ENCODE measurements at regions of chr1 and their contacts with region 1.

Region 1: DNA sequence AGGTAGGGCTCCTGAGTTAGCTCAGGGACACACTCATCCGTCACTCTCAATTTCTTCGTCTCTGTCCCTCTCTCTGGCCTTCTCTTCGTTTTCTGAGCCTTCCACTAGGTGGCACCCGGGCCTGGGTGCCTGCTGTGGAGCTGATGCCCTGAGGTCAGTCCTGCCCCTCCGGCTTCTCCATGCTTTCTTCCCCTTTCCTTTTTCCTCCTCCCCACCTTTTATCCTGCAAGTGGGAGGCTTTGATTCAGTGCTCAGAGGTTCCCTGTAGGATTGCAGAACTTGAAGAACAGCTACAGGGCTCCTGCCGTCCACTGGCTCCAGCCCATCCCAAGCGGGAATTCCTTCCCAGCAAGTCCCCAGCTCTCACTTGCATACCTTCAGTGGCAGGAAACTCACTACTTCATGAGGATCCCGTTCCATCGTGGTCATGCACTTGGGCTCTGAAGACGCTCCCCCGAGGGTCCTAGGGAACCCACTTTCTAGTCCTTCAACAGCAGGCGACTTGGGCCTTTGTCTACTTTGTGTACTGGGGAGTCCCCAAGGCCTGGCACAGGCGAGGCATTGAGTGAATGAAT is 45.6 kb downstream of the SRRM1 start:
- DNase-seq: peak; percentile 74
- ATAC-seq: peak; percentile 86
- H3K4me3 Mint-ChIP-seq: no peak overlapping the region
- H3K27ac Mint-ChIP-seq: no peak overlapping the region
- H3K4me1 Mint-ChIP-seq: peaks cover under 1% of the 10 kb centered on the region
- H3K27me3 Mint-ChIP-seq: peaks cover 6% of the 10 kb centered on the region

Region 2: GRCh38 chr1:24403806-24404205 is 284.9 kb before region 1 on chr1:
- CTCF ChIA-PET with region 1: no interaction called
- DNase-seq: no peak
- ATAC-seq: no peak
- H3K4me3 Mint-ChIP-seq: no peak overlapping the region
- H3K27ac Mint-ChIP-seq: no peak overlapping the region
- H3K4me1 Mint-ChIP-seq: no peaks in the 10 kb centered on the region
- H3K27me3 Mint-ChIP-seq: no peaks in the 10 kb centered on the region

Region 3: DNA sequence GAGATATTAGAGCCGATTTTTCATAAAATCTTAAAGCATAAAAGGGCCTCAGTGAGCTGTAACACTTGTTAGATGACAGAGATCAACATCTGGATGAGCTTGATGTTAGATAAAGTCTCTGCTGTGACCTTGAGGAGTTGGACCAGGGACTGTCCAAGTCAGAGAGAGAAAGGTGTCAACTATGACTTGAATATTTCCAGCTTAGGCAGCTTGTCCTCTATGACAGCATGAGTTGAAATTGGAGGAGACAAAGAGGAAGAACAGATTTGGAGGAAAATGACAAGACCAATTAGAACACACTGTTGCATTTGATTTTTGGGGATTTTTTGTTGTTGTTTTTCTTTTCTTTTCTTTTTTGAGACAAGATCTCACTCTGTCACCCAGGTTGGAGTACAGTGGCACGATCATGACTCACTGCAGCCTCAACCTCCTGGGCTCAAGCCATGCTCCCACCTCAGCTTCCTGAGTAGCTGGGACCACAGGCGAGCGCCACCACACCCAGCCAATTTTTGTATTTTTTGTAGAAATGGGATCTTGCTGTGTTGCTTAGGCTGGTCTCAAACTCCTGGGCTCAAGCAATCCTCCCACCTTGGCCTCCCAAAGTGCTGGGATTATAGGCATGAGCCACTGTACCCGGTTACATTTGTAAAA is 21.2 kb after region 1 on chr1:
- CTCF ChIA-PET with region 1: interaction called, 13 read pairs
- DNase-seq: peak; percentile 77
- ATAC-seq: peak; percentile 67
- H3K4me3 Mint-ChIP-seq: no peak overlapping the region
- H3K27ac Mint-ChIP-seq: peak overlapping the region; percentile 70
- H3K4me1 Mint-ChIP-seq: peaks cover 24% of the 10 kb centered on the region
- H3K27me3 Mint-ChIP-seq: no peaks in the 10 kb centered on the region

Region 4: DNA sequence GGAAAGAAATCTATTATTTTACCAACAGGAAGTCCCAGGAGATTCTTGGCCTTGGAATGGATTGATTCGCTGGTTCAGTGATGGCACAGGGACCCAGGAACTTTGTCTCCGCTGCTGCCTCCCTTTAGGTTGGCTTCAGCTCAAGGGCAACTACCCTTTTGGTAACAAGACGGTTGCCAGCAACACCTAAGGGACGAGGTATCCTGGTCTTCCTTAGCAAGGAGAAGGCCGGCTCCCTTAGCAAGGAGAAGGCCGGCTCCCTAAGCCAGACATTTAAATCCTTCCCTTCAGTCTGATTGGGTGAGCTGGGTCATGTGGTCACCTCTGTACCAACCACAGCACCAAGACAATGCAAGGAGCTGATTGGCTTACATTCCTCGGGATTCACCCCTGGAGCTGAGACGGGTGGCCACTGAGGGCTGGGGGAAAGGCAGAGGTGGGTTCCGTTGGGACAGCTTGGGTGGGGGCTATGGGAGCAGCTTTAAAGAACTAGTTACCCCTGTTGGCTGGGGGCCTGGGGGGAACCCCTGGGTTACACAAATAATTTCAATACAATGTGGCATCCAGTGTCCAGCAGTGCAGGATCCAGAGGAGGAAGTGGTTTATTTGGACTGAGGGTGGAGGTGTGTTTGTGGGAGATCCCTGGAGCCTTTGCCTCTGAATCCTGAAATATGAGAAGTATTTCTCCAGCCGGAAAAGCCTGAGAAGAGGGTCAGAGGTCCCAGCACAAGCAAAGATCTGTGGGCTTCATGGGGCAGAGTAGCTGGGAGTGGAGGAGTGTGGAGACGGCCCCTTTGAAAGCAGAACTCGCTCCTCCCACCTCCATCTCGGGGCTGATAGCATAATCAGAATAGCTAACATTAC is 35.9 kb after region 1 on chr1:
- CTCF ChIA-PET with region 1: interaction called, 11 read pairs
- DNase-seq: no peak
- ATAC-seq: no peak
- H3K4me3 Mint-ChIP-seq: no peak overlapping the region
- H3K27ac Mint-ChIP-seq: no peak overlapping the region
- H3K4me1 Mint-ChIP-seq: peaks cover 13% of the 10 kb centered on the region
- H3K27me3 Mint-ChIP-seq: peaks cover 13% of the 10 kb centered on the region

Region 5: DNA sequence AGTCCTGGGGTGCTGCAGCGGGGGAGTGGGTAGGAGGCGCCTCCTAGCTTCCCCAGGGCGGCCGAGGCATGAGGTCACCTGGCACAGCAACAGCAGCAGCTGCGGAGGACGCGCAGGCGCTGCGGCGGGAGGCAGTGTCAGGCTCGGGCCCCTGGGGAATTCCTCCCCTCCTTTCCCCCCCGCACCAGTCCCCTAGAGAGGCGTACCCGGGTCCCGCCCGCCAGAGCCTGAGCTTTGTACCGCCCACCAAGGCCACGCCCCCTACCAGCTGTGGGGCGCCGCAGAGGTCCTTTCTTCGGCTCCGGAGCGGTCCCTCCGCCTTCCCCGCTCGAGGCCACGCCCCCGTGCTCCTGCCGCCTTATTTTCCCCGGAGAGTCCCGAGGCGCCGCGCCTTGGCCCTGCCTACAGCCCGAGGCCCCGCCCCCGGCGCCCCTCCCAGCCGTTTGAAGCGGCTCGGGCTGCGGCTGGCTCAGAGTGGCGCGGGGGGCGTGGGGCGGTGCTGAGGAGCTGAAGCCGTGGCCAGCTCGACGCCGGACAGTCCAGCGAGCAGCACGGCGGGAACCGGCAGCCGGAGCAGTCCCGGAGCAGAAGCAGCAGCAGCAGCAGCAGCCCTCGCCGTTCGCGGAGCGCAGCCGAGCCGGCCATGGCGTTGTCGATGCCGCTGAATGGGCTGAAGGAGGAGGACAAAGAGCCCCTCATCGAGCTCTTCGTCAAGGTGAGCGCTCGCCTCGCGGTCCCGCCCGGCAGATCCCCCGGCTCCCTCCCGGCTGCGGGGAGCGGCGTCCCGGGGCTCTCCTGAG is 56.4 kb after region 1 on chr1 and contains the start of gene CLIC4:
- CTCF ChIA-PET with region 1: interaction called, 12 read pairs
- DNase-seq: peak; percentile 99
- ATAC-seq: peak; percentile 94
- H3K4me3 Mint-ChIP-seq: peak within 1 kb of the TSS; percentile 82
- H3K27ac Mint-ChIP-seq: peak within 1 kb of the TSS; percentile 69
- H3K4me1 Mint-ChIP-seq: peaks cover 44% of the 10 kb centered on the region
- H3K27me3 Mint-ChIP-seq: peaks cover 21% of the 10 kb centered on the region
- total RNA-seq, gene CLIC4: 16.9 to 23.0 TPM

Region 6: DNA sequence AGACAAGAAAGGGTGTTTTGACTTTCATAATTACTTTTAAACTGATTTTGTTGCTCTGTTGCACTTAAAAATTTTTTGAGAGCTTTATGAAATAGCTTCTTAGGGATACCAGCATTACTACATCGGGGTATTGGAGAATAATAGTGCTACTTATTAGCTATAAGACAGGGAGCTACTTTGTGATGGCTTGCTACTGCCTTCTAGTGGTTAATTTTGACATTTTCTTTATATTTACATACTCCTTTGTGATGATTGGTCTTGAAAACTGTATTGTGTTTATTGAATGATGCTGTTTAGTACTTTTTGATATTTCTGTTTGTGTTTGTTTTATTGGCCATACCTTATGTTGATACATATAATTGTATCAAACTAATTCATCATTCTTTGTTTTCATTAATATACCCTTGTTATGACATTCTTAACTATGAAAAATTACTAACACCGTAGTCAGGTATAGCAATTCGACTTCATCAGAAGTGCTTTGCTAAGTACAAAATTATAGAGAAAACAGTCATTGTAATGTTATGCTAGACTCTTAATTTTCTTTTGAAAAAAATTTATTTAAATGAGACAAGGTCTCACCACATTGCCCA is 142.1 kb after region 1 on chr1:
- CTCF ChIA-PET with region 1: interaction called, 192 read pairs
- DNase-seq: no peak
- ATAC-seq: peak; percentile 53
- H3K4me3 Mint-ChIP-seq: no peak overlapping the region
- H3K27ac Mint-ChIP-seq: no peak overlapping the region
- H3K4me1 Mint-ChIP-seq: no peaks in the 10 kb centered on the region
- H3K27me3 Mint-ChIP-seq: peaks cover 11% of the 10 kb centered on the region

Region 7: DNA sequence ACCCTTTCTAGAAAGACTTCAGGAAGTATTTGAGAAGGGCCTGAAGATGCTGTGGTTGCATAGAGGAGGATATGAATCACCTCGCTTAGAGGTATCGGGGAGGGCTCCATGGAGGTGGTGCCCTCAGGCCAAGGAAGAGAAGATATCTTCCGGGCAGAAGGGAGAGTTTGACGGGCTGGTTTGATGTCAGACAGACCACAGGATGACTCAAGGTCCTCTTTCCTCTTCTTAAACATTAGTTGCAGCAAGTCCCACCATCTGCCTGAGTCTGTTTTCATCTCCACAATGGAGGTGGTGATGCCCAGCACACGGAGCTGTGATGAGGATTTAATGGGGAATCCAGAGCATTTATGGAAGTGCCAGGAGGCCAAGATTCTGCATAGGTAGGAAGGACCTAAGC is 266.5 kb after region 1 on chr1:
- CTCF ChIA-PET with region 1: no interaction called
- DNase-seq: peak; percentile 94
- ATAC-seq: peak; percentile 77
- H3K4me3 Mint-ChIP-seq: peak overlapping the region; percentile 77
- H3K27ac Mint-ChIP-seq: peak overlapping the region; percentile 92
- H3K4me1 Mint-ChIP-seq: peaks cover 93% of the 10 kb centered on the region
- H3K27me3 Mint-ChIP-seq: no peaks in the 10 kb centered on the region